Calu3 (cell line): ENCODE measurements at regions of chr12 and their contacts with region 1.

Region 1: GRCh38 chr12:6752921-6753771 is at the start of gene MLF2:
- DNase-seq: peak; percentile 98
- H3K4me3 Mint-ChIP-seq: peak within 1 kb of the TSS; percentile 98
- H3K27ac Mint-ChIP-seq: peak within 1 kb of the TSS; percentile 88
- H3K4me1 Mint-ChIP-seq: peaks cover 7% of the 10 kb centered on the region
- H3K27me3 Mint-ChIP-seq: peaks cover 22% of the 10 kb centered on the region
- CTCF ChIP-seq: peak; percentile 90
- total RNA-seq, gene MLF2: 176 and 183 TPM in 2 replicates

Region 2: DNA sequence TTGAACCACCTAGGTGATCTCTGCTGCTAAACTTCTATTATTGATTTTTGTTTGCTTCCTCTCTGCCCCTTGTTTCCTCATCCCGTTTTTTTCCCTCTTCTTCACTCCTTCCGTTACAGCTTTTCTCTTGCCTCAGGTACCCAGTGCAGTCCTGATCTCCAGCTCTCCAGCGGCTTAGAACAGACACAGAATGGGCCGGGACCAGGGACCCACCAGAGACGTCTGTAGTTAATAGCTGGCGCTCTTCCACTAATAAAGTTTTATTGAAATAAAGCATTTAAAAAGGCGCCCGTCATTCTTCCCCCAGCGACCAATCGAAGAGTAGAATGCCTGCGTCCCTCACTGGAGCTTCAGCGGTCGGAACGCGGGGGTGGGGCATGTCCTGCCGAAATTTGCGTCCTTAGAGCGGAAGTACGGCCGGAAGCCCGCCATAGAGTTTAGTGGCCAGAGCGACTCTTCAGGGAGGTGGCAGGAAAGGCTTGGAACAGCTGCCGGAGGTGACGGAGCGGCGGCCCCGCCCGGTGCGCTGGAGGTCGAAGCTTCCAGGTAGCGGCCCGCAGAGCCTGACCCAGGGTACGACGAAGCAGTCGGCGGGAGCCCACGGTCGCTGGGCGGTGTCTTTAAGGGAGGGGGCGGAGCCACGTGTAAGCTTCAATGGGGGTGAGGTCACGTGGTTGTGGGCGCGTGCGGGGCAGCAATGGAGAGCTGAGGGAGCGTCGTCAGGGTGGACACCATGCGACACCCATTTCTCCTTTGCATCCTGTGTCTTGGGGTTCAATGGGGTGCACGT is 29.3 kb before region 1 on chr12 and contains the start of gene COPS7A:
- CTCF ChIA-PET with region 1: interaction called, 13 read pairs
- intact Hi-C with region 1: no loop called
- DNase-seq: peak; percentile 97
- H3K4me3 Mint-ChIP-seq: peak within 1 kb of the TSS; percentile 77
- H3K27ac Mint-ChIP-seq: peak within 1 kb of the TSS; percentile 72
- H3K4me1 Mint-ChIP-seq: peaks cover 15% of the 10 kb centered on the region
- H3K27me3 Mint-ChIP-seq: peaks cover 10% of the 10 kb centered on the region
- CTCF ChIP-seq: no peak
- total RNA-seq, gene COPS7A: 47.3 and 55.3 TPM in 2 replicates

Region 3: DNA sequence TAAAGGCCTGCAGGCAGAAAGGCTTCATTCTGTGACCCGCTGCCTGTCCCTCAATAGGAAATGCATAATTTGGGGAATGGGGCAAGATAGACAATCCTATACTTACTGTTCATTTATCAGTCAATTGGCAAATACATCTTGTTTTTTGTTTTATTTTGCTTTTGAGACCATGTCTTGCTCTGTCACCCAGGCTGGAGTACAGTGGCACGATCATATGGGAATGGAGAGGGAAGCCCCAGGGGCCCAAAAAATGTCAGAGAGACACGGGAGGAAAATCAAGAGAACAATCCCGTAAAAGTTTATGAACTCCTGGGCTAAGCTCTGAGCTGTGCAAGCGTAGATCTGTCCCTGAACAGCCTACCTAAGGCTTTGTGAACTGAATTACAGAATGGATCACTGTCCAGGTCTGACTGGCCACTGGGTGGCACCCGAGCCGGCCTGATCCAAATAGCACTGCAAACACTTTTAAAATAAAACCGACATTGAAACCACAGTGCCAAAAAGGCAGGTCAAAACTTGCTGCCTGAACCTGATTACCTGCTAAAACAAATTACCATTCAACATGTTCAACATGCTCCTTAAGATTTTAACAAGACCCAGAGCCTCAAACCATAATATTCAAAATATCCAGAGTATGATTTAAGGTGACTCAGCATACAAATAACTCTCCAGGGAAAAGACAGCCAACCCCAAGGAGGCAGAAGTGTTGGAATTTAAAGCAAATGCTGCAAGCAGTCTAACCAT is 17.5 kb before region 1 on chr12:
- CTCF ChIA-PET with region 1: no interaction called
- intact Hi-C with region 1: no loop called
- DNase-seq: peak; percentile 58
- H3K4me3 Mint-ChIP-seq: no peak overlapping the region
- H3K27ac Mint-ChIP-seq: no peak overlapping the region
- H3K4me1 Mint-ChIP-seq: peaks cover 8% of the 10 kb centered on the region
- H3K27me3 Mint-ChIP-seq: no peaks in the 10 kb centered on the region
- CTCF ChIP-seq: no peak

Region 4: GRCh38 chr12:6766651-6767349 is 13.7 kb after region 1 on chr12:
- CTCF ChIA-PET with region 1: interaction called, 24 read pairs
- intact Hi-C with region 1: no loop called
- DNase-seq: peak; percentile 87
- H3K4me3 Mint-ChIP-seq: peak overlapping the region; percentile 81
- H3K27ac Mint-ChIP-seq: peak overlapping the region; percentile 80
- H3K4me1 Mint-ChIP-seq: peaks cover 40% of the 10 kb centered on the region
- H3K27me3 Mint-ChIP-seq: peaks cover 34% of the 10 kb centered on the region
- CTCF ChIP-seq: peak; percentile 61

Region 5: DNA sequence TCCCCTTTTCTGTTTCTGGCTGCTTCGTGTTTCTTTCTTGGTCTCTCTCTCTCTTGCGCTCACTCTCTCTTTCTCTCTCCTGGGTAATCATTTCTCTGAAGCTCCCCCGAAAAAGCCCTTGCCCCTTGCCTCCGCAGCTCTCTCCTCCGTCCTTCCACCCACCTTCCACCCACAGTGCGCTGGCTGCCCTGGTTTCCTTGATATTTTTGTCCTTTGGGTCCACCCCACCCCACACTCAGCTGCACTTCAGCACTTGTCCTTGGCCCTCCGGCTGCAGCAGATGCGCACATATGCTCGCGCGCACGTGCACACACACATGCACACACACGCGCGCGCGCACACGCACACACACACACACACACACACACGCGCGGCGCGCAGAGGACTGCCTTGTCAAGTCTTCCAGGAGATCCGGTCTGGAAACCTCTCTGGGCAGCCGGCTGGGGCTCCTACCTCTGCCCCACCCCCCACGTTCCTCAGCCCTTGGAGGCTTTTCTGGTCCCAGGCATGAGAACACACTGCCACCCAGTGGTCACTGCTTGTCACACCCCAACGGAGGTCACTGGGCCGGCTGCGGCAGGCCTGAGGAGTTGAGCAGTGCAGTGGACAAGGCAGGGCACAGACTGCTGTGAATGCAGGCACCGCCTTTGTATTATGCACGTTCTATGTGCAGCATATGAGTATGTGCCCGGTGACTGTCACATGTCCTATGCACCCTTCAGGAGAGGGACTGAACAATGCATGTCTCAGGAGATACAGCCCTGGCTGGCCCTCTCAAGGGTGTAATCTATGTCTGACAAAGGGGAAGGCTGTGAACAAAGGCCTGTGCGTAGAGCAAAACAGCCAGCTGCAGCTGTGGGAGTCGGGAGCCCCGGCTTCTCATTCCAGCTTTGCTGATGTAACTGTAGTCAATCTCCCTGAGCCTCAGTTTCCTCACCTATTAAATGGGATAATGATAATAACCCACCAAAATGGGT is 25.7 kb after region 1 on chr12:
- CTCF ChIA-PET with region 1: interaction called, 5 read pairs
- intact Hi-C with region 1: loop called (anchors 2 kb)
- DNase-seq: peak; percentile 96
- H3K4me3 Mint-ChIP-seq: peak overlapping the region; percentile 70
- H3K27ac Mint-ChIP-seq: no peak overlapping the region
- H3K4me1 Mint-ChIP-seq: peaks cover 35% of the 10 kb centered on the region
- H3K27me3 Mint-ChIP-seq: peaks cover 67% of the 10 kb centered on the region
- CTCF ChIP-seq: peak; percentile 91

Region 6: GRCh38 chr12:6839482-6840201 is 86.5 kb after region 1 on chr12:
- CTCF ChIA-PET with region 1: interaction called, 4 read pairs
- intact Hi-C with region 1: loop called (anchors 2 kb)
- DNase-seq: no peak
- H3K4me3 Mint-ChIP-seq: no peak overlapping the region
- H3K27ac Mint-ChIP-seq: no peak overlapping the region
- H3K4me1 Mint-ChIP-seq: peaks cover 13% of the 10 kb centered on the region
- H3K27me3 Mint-ChIP-seq: peaks cover 67% of the 10 kb centered on the region
- CTCF ChIP-seq: no peak

Region 7: DNA sequence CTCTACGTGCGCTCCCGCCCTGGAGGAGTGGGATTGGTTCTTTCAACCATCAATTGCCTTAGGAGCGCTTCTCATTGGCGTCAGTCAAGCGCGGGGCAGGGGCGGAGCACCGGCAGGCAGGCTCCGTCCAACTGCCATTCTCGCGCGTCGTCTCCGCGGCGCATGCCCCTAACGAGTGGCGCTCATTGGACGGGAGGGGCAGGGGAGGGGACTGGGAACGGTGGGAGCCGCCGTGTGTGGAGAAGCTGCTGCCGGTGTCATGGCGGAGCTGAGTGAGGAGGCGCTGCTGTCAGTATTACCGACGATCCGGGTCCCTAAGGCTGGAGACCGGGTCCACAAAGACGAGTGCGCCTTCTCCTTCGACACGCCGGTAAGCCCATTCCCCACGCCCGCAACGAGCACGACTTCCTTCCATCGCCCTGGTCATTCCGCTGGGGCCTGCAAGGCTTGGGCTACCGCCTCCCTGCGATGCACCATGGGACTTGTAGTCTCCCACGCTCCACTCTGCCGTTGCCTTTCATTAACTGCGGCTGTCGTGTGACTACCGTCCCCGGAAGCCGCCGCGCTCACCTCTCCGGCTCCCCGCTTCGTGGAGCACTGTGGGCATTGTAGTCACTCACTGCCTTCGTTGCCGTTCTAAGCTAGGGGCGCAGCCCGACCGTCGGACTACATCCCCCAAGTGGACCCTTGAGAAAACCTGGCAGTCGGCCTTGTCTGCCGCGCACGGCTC is 98.9 kb after region 1 on chr12 and contains the start of gene USP5:
- CTCF ChIA-PET with region 1: interaction called, 19 read pairs
- intact Hi-C with region 1: no loop called
- DNase-seq: peak; percentile 97
- H3K4me3 Mint-ChIP-seq: peak within 1 kb of the TSS; percentile 94
- H3K27ac Mint-ChIP-seq: peak within 1 kb of the TSS; percentile 89
- H3K4me1 Mint-ChIP-seq: peaks cover 27% of the 10 kb centered on the region
- H3K27me3 Mint-ChIP-seq: no peaks in the 10 kb centered on the region
- CTCF ChIP-seq: no peak
- total RNA-seq, gene USP5: 126 and 128 TPM in 2 replicates